Posterior vena cava (tissue), 2 donors: ENCODE measurements at regions of chr11 and their contacts with region 1.

Region 1: DNA sequence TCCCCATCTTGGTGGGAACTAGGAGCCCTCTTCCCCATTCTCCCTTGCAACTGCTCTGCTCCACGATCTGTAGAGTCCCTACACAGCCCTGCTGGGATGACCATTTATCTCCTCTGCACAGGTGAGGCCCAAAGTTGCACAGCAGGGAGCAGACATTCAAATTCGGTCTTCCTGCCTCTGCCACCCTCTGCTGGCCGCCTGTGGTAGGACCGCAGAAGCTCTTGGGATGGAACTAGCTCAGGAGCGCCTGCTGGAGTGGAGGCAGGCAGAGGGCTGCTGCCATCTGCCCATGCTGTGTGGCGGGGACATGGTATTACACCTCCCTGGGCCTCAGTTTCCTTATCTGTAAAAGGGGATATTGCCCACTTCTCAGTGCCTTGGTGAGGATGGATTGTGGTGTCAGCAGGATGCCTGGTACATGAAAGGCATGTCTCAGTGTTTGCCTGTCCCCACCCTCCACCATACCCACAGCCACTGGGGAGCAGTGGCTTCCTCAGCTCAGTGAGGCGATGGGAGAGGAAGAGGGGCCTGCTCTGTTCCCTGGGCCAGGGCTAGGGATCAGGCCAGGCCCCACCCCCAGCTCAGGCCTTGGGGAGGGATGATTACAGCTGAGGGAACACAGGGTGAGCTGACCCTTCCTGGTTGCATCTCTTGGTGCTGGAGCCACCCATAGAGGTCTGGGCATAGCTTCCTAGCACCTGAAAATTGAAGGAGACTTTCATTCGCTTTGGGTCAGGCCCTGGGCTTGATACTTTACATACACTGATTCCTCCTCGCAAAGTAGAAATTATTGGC is 11.3 kb upstream of the OMP start:
- DNase-seq: peak; percentile 93

Region 2: GRCh38 chr11:77047007-77047927 is 44.1 kb before region 1 on chr11:
- intact Hi-C with region 1: loop called (anchors 2 to 5 kb)
- DNase-seq: no peak

Region 3: DNA sequence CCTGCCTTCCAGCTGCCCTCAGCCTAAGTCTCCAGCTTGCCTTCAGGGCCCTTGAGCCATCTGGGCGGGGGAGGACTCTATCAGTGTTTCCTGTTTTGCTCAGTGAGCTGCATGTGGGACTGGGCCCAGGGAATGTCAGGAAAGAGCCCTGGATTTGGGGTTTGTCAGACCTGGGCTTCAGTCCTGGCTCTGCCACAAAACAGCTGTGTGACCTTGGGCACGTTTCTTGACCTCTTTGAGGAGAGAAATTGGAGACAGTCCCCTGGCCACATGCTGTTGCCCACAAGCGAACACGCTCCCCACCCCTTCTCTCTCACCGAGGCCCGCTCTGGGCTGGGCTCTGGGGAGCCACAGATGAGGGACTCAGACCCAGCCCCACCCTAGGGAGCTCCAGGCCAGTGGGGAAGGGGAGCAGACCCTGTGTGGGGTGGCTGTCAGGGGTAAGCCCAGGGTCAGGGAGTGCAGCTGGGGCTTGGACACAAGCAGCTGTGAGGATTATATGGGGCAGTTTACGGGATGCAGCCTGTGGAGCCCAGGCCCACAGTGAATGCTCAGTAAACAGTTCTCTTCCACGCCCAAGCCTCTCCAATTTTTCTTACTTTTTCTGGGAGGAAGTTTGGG is 49.0 kb after region 1 on chr11:
- intact Hi-C with region 1: no loop called
- DNase-seq: no peak